ENCODE measurements at regions of chr7 and their contacts with region 1.

Region 1: GRCh38 chr7:4830176-4830575 is 31.7 kb downstream of the PAPOLB start:
- DNase-seq: peak in 5 of 6 donors; percentile 66 to 76 (median 71)
- ATAC-seq: peak; percentile 81 to 99 (median 92)
- H3K4me3 ChIP-seq: no peak overlapping the region
- H3K27ac ChIP-seq: no peak overlapping the region
- H3K4me1 ChIP-seq: no peaks in the 10 kb centered on the region
- H3K27me3 ChIP-seq: no peaks in the 10 kb centered on the region
- CTCF ChIP-seq: peak; percentile 44 to 86 (median 56)

Region 2: DNA sequence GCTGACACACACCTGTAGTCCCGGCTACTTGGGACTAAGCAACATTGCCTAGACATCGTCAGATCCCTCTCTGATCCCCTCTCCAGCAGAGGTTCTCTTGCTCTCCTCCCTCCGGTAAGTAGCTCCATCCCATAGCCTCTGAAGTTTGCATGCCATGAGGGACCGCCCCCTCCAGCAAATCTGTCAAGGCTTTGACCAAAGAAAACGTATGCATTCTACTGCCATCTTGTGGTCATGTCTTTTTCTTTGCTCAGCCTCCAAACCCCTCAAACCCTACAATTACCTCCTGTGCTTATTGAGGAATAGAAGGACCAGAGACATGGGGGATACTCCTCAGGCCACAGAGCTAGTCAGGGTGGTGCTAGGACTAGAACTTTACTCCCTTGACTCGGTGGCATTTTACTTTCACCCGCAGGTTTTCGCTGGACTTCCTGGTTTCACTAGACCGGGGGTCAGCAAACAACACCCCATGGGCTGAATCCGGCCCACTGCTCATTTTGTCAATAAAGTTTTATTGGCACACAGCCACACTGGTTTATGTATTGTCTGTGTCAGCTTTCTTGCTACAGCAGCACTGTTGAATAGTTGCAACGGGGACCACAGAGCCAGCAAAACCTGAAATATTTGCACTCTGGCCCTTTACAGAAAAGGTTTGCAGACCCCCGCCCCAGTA is 350.7 kb before region 1 on chr7:
- intact Hi-C with region 1: no loop called
- DNase-seq: peak in 2 of 6 donors; percentile 6 to 21
- ATAC-seq: peak in 3 of 4 donors; percentile 71 to 78 (median 76)
- H3K4me3 ChIP-seq: no peak overlapping the region
- H3K27ac ChIP-seq: no peak overlapping the region
- H3K4me1 ChIP-seq: no peaks in the 10 kb centered on the region
- H3K27me3 ChIP-seq: no peaks in the 10 kb centered on the region
- CTCF ChIP-seq: peak in 2 of 4 donors; percentile 12 to 35

Region 3: GRCh38 chr7:4738711-4739527 is 91.3 kb before region 1 on chr7:
- intact Hi-C with region 1: no loop called
- DNase-seq: peak in 2 of 6 donors; percentile 21 to 40
- ATAC-seq: peak; percentile 53 to 73 (median 70)
- H3K4me3 ChIP-seq: peak overlapping the region in 2 of 4 donors; percentile 13 to 22
- H3K27ac ChIP-seq: peak overlapping the region in 3 of 4 donors; percentile 8 to 53 (median 9)
- H3K4me1 ChIP-seq: peaks cover 0 to 5% (median 2%) of the 10 kb centered on the region in 3 donors
- H3K27me3 ChIP-seq: no peaks in the 10 kb centered on the region
- CTCF ChIP-seq: no peak

Region 4: DNA sequence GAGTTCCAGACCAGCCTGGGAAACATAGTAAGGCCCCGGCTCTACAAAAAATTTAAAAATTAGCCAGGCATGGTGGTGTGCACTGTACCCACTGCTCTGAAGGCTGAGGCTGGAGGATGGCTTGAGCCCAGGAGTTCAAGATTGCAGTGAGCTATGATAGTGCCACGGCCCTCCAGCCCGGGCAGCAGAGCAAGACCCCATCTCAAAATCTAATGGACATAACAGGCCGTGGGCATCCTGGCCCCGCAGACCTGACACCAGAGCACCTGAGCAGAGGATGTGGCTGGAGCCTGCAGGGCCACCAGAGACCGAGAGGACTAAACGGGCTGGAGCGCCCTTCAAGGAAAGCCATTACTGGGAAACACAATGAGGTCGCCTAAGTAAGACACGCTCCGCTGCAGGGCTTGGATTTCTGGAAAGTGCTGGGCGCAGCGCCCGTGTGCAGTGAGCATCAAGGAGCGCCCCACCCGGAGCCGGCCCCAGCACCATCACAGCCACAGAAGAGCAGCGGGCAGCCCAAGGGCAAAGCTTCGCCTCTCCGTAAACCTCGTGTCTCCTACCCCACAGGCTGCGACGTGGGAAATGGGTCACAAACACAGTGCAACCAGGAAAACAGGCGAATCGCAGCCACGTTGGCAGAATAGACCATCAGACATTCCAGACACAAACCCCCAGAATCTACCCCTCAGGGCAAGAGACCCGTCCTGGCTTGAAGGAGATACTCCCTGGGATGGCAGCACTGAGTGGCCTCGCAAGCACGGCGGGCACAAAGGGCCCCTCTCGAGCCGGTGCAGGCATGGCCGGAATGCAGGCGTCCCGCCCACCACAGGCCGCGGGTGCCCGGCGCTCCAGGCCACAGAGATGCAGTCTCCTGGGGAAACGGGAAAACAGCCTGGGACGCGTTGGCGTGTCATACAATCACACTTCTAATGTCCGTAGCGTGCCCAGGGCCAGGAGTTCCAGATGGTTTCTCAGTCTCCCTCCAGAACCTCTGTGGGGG is 48.5 kb after region 1 on chr7:
- intact Hi-C with region 1: loop called in 1 of 3 experiments (anchors 5 kb)
- DNase-seq: no peak
- ATAC-seq: no peak
- H3K4me3 ChIP-seq: no peak overlapping the region
- H3K27ac ChIP-seq: no peak overlapping the region
- H3K4me1 ChIP-seq: peaks cover 0 to 7% (median 0%) of the 10 kb centered on the region in 3 donors
- H3K27me3 ChIP-seq: no peaks in the 10 kb centered on the region
- CTCF ChIP-seq: no peak

Measured in pancreas (tissue), 10 donors.